ENCODE measurements at regions of chr9 and their contacts with region 1.

Region 1: DNA sequence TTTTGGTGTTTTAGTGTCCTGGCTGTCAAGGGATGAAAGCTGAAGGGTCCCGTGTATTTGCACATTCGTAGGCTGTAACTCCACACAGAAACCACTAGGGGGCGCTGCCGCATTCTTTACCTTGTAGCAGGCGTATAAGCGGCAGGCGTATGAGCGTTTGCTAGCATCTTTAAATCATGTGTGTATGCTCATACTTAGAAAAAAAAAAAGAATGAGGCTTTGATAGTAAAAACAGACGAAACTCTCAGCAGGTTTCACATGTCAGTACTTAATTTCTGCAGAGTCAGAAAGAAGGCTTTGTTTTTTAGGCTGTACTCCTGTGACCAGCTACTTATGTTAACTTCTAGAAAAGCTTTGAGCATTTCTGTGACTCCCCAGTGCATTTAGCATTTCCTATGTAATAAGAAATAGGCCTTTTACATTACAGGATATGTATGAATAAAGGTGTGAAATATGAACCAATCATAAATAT is 218.8 kb upstream of the ADAMTSL1 start:
- DNase-seq: peak; percentile 9
- ATAC-seq: peak; percentile 96
- H3K4me3 ChIP-seq: no peak overlapping the region
- H3K27ac ChIP-seq: no peak overlapping the region
- H3K4me1 ChIP-seq: no peaks in the 10 kb centered on the region
- H3K27me3 ChIP-seq: no peaks in the 10 kb centered on the region
- CTCF ChIP-seq: peak; percentile 80 to 92 (median 88)
- EP300 ChIP-seq: no peak
- POLR2A ChIP-seq: no peak
- RAD21 ChIP-seq: peak; percentile 96

Region 2: GRCh38 chr9:17793713-17794622 is 461.2 kb before region 1 on chr9:
- CTCF ChIA-PET with region 1: no interaction called
- POLR2A ChIA-PET with region 1: no interaction called
- RAD21 ChIA-PET with region 1: no interaction called
- SMC1A ChIA-PET with region 1: no interaction called
- in situ Hi-C with region 1: no loop called
- intact Hi-C with region 1: no loop called
- DNase-seq: no peak
- ATAC-seq: peak; percentile 78
- H3K4me3 ChIP-seq: no peak overlapping the region
- H3K27ac ChIP-seq: no peak overlapping the region
- H3K4me1 ChIP-seq: no peaks in the 10 kb centered on the region
- H3K27me3 ChIP-seq: no peaks in the 10 kb centered on the region
- CTCF ChIP-seq: peak; percentile 10 to 30 (median 14); a peak in 2 of 6 replicates
- EP300 ChIP-seq: no peak
- POLR2A ChIP-seq: no peak
- RAD21 ChIP-seq: peak; percentile 22; the same call in 1 of the 2 replicates

Region 3: DNA sequence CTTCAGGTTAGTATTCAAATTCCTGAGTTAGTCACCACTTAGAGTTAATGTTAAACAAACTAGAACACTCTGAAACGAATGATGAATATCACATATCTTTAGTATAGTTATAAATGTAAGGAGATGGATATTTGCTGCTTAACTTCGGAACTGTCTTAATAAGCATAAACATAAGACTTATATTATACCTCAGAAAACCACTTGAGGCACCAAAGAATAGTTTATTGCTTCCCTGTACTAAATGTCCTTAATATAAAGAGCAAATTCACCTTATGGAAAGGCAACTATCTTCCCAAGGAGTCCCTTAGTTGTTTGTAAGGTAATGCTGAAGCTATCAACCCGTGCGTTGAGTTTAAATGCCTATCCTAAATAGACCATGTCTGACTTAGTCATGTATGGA is 81.3 kb before region 1 on chr9:
- CTCF ChIA-PET with region 1: no interaction called
- POLR2A ChIA-PET with region 1: no interaction called
- RAD21 ChIA-PET with region 1: no interaction called
- SMC1A ChIA-PET with region 1: no interaction called
- in situ Hi-C with region 1: no loop called
- intact Hi-C with region 1: no loop called
- DNase-seq: no peak
- ATAC-seq: no peak
- H3K4me3 ChIP-seq: no peak overlapping the region
- H3K27ac ChIP-seq: no peak overlapping the region
- H3K4me1 ChIP-seq: no peaks in the 10 kb centered on the region
- H3K27me3 ChIP-seq: no peaks in the 10 kb centered on the region
- CTCF ChIP-seq: no peak
- EP300 ChIP-seq: no peak
- POLR2A ChIP-seq: no peak
- RAD21 ChIP-seq: no peak

Region 4: GRCh38 chr9:18268381-18268780 is 13.2 kb after region 1 on chr9:
- CTCF ChIA-PET with region 1: interaction called, 25 read pairs
- POLR2A ChIA-PET with region 1: no interaction called
- RAD21 ChIA-PET with region 1: no interaction called
- SMC1A ChIA-PET with region 1: no interaction called
- in situ Hi-C with region 1: no loop called
- intact Hi-C with region 1: no loop called
- DNase-seq: no peak
- ATAC-seq: no peak
- H3K4me3 ChIP-seq: no peak overlapping the region
- H3K27ac ChIP-seq: no peak overlapping the region
- H3K4me1 ChIP-seq: no peaks in the 10 kb centered on the region
- H3K27me3 ChIP-seq: no peaks in the 10 kb centered on the region
- CTCF ChIP-seq: no peak
- EP300 ChIP-seq: no peak
- POLR2A ChIP-seq: no peak
- RAD21 ChIP-seq: no peak

Region 5: GRCh38 chr9:18396102-18396728 is 141.0 kb after region 1 on chr9:
- CTCF ChIA-PET with region 1: interaction called, 9 read pairs
- POLR2A ChIA-PET with region 1: no interaction called
- RAD21 ChIA-PET with region 1: interaction called, 3 read pairs
- SMC1A ChIA-PET with region 1: interaction called, 5 read pairs
- in situ Hi-C with region 1: no loop called
- intact Hi-C with region 1: loop called (anchors 2 kb)
- DNase-seq: no peak
- ATAC-seq: no peak
- H3K4me3 ChIP-seq: no peak overlapping the region
- H3K27ac ChIP-seq: no peak overlapping the region
- H3K4me1 ChIP-seq: no peaks in the 10 kb centered on the region
- H3K27me3 ChIP-seq: no peaks in the 10 kb centered on the region
- CTCF ChIP-seq: 0 out of 6 replicates have a peak, but pooled peaks of 1 of the 3 experiments have one; percentile 5
- EP300 ChIP-seq: no peak
- POLR2A ChIP-seq: no peak
- RAD21 ChIP-seq: peak; percentile 32; the same call in 1 of the 2 replicates

Region 6: DNA sequence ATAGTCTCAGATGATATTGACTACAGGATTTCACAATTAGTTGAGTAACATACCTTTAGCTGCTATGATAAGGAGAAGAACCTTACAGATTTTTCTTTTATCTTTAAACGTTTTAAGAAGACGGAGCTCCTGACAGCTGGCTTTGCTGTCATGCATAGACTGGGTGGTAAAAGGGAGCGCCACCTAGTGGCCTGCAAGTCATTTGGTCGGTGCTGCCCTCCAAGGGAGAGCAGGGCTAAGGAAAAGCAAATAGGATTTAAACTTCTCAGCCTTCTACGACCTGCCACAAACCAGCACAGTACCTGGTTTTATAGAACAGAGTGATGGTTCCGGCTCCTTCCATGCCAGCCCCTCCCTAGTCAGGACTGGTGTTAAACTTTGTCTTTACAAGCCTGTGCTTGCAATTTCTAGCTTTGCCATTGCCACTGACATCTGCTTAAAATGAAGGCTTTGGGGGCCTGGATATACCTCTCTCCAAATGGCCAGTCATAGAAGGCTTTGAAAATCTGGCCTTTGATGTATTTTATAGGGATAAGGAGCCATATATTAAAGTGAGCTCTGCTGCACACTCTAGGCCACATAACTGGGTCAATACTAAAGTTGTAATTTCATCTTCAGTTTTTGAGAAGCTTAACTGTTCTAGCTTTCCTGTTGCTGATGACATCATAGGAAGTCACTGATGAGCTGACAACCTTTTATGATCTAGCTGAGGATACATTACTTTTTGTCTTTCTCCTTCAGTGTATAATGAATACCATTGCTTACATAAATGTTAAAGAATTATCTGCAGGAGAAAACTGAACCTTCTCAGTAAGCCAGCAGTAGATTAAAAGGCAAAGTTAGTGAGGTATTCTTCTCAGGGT is 187.7 kb after region 1 on chr9:
- CTCF ChIA-PET with region 1: interaction called, 105 read pairs
- POLR2A ChIA-PET with region 1: no interaction called
- RAD21 ChIA-PET with region 1: interaction called, 42 read pairs
- SMC1A ChIA-PET with region 1: interaction called, 26 read pairs
- in situ Hi-C with region 1: no loop called
- intact Hi-C with region 1: loop called (anchors 1 kb)
- DNase-seq: no peak
- ATAC-seq: peak; percentile 98
- H3K4me3 ChIP-seq: no peak overlapping the region
- H3K27ac ChIP-seq: no peak overlapping the region
- H3K4me1 ChIP-seq: no peaks in the 10 kb centered on the region
- H3K27me3 ChIP-seq: no peaks in the 10 kb centered on the region; a peak in 1 of 4 replicates
- CTCF ChIP-seq: peak; percentile 79 to 92 (median 89)
- EP300 ChIP-seq: no peak
- POLR2A ChIP-seq: no peak
- RAD21 ChIP-seq: peak; percentile 74

Region 7: GRCh38 chr9:18791074-18791473 is 535.9 kb after region 1 on chr9:
- CTCF ChIA-PET with region 1: interaction called, 12 read pairs
- POLR2A ChIA-PET with region 1: no interaction called
- RAD21 ChIA-PET with region 1: interaction called, 3 read pairs
- SMC1A ChIA-PET with region 1: interaction called, 5 read pairs
- in situ Hi-C with region 1: no loop called
- intact Hi-C with region 1: loop called (anchors 10 kb)
- DNase-seq: no peak
- ATAC-seq: peak; percentile 85
- H3K4me3 ChIP-seq: no peak overlapping the region
- H3K27ac ChIP-seq: no peak overlapping the region
- H3K4me1 ChIP-seq: no peaks in the 10 kb centered on the region
- H3K27me3 ChIP-seq: no peaks in the 10 kb centered on the region
- CTCF ChIP-seq: peak; percentile 49 to 59 (median 55); a peak in 5 of 6 replicates
- EP300 ChIP-seq: no peak
- POLR2A ChIP-seq: no peak
- RAD21 ChIP-seq: peak; percentile 66; the same call in 1 of the 2 replicates

Region 8: DNA sequence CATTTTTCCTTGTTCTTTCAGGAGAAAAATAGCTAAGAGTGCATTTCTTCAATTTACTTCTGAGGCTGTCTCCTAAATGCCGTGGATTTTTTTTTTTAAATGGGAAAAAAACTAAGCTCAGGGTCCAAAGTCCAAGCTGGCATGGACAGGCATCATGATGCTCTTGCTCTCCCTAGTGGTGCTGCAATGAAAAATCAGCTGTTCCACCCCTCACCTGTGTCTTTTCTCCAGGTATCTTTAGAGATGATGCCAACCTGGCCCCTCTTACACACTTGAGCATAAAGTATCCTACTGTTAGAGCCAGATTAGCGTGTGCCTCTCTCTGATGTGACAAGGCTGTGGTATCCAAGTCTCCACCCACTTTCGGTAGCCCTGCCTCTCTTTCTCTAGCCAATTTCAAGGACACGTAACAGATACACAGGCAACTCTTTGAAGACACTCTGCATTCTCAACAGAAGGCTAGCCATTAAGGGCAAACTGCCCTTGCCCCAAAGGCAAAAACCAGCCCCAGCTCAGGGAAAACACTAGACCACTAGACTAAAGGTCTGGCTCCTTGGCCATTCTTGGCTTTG is 569.0 kb after region 1 on chr9:
- CTCF ChIA-PET with region 1: interaction called, 13 read pairs
- POLR2A ChIA-PET with region 1: no interaction called
- RAD21 ChIA-PET with region 1: no interaction called
- SMC1A ChIA-PET with region 1: interaction called, 5 read pairs
- in situ Hi-C with region 1: no loop called
- intact Hi-C with region 1: loop called (anchors 10 kb)
- DNase-seq: no peak
- ATAC-seq: peak; percentile 29; the same call in 1 of the 3 replicates
- H3K4me3 ChIP-seq: no peak overlapping the region
- H3K27ac ChIP-seq: no peak overlapping the region
- H3K4me1 ChIP-seq: no peaks in the 10 kb centered on the region
- H3K27me3 ChIP-seq: no peaks in the 10 kb centered on the region; a peak in 1 of 4 replicates
- CTCF ChIP-seq: peak; percentile 28 to 41 (median 38); a peak in 5 of 6 replicates
- EP300 ChIP-seq: no peak
- POLR2A ChIP-seq: no peak
- RAD21 ChIP-seq: peak; percentile 67